Ascending aorta (tissue), 2 donors: ENCODE measurements at regions of chr5 and their contacts with region 1.

Region 1: DNA sequence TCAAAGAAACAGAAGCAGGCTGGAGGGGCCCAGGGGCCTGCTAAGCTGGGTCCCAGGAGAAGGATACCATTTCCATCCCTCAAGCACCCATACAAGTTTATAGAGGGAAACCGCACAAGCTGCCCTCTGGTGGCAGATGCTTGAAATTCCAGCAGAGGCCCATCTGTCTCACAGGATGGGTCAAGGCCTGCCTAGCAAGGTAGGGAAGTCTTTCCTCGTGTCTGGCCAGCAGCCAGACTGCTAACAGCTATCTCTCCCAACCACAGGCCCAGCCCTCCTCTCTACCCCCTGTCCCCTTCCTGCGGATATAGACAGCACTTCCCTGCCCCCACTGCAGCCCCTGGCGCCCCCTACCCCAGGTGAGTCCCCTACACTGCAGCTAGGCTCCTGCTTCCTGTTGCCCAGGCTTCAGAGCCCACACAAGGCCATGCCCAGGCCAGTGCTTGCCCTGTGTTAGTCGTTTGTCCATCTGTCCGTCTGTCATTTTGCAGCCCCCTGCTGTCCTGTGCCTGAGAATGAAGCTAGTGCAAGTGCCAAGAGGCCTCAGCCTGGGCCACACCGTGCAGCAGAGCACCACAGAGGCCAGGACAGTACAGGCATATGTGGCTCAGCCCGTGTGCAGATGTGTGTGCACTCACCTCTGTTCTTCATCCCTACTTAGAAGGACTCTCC is 26.2 kb downstream of the TCF7 start:
- DNase-seq: no peak
- H3K4me3 ChIP-seq: no peak overlapping the region
- H3K27ac ChIP-seq: no peak overlapping the region
- H3K4me1 ChIP-seq: no peaks in the 10 kb centered on the region
- H3K27me3 ChIP-seq: no peaks in the 10 kb centered on the region
- CTCF ChIP-seq: peak; percentile 61 to 72 (median 62)

Region 2: DNA sequence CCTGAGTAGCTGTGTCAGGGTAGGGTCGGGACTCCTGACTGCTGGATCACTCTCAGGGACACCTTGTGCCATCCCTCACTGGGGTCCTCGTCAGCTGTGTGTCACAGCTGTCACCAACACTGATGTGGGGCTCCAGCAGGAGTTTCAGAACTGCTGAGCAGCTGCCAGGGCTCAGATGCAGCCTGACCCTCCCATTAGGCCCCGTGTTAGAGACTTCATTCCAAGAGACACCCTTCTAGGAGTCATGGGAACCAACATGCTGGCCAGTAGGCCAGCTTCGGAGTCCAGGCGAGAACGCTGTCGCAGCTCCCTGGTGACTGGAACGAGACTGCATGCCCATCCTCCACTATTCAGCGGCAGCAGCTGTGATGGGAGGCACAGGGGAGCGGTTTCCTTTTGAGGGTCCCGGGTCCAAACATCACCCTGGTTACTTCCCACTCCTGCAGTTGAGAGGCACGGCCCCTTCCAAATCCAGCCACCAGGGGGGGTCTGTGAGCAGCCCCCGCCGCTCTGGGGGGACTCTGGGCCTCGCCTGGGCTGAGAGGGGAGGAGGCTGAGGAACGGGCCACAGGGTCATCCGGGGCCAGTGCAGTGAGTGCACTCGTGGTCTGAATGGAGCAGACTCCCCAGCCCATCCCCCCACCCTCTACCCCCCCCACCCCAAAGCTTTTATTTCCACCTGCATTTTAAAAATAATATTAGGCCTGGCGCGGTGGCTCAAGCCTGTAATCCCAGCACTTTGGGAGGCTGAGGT is 38.8 kb before region 1 on chr5:
- intact Hi-C with region 1: loop called (anchors 2 kb)
- DNase-seq: no peak
- H3K4me3 ChIP-seq: no peak overlapping the region
- H3K27ac ChIP-seq: no peak overlapping the region
- H3K4me1 ChIP-seq: peaks cover 3 to 17% of the 10 kb centered on the region in 2 donors
- H3K27me3 ChIP-seq: no peaks in the 10 kb centered on the region
- CTCF ChIP-seq: peak; percentile 74 to 86 (median 86)

Region 3: GRCh38 chr5:134240421-134240962 is 99.8 kb after region 1 on chr5:
- intact Hi-C with region 1: no loop called
- DNase-seq: no peak
- H3K4me3 ChIP-seq: no peak overlapping the region
- H3K27ac ChIP-seq: peak overlapping the region in 1 of 2 donors; percentile 5
- H3K4me1 ChIP-seq: peaks cover 0 to 7% of the 10 kb centered on the region in 2 donors
- H3K27me3 ChIP-seq: no peaks in the 10 kb centered on the region
- CTCF ChIP-seq: no peak